PC-3 (cell line): ENCODE measurements at regions of chr17 and their contacts with region 1.

Region 1: GRCh38 chr17:48995974-48996721 is 1.0 kb upstream of the IGF2BP1 start:
- DNase-seq: no peak
- ATAC-seq: no peak
- H3K4me3 ChIP-seq: no peak overlapping the region
- H3K27ac ChIP-seq: no peak overlapping the region
- H3K4me1 ChIP-seq: no peaks in the 10 kb centered on the region
- H3K27me3 ChIP-seq: peaks cover 94% of the 10 kb centered on the region
- CTCF ChIP-seq: no peak

Region 2: DNA sequence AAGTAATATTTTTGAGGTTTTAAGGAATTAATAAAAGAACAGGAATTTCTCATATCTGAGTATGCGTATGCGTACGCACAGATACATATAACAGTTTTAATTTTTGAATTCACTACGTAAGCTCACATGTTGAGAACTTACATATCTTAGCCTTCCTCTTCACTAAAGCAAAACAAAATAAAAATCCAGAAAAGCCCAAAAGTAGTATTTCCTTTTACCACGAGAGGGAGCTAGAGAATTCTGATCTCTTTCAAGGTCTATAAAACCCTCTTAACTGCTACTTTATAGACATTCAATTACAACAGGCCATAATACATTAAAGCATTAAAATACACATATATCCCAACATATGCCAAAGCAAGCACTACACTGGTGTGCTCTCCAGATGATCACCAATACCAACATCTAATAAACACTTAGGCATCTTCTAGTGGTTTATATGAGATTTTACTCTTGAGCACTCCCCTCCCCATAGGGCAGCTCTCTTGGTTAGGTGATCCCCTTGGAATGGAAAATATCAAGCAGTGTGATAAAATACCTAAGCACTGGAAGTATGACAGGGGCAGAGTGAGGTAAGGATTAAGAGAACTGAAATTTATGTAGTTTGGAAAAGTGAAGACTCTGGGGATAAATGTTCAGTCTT is 660.2 kb before region 1 on chr17:
- CTCF ChIA-PET with region 1: interaction called, 11 read pairs
- POLR2A ChIA-PET with region 1: no interaction called
- intact Hi-C with region 1: no loop called
- DNase-seq: peak; percentile 96
- ATAC-seq: peak; percentile 64
- H3K4me3 ChIP-seq: no peak overlapping the region
- H3K27ac ChIP-seq: no peak overlapping the region
- H3K4me1 ChIP-seq: peaks cover 13% of the 10 kb centered on the region
- H3K27me3 ChIP-seq: no peaks in the 10 kb centered on the region; the same call in 1 of the 2 replicates
- CTCF ChIP-seq: peak; percentile 93

Region 3: GRCh38 chr17:49012769-49013255 is 16.7 kb after region 1 on chr17:
- CTCF ChIA-PET with region 1: no interaction called
- POLR2A ChIA-PET with region 1: interaction called, 10 read pairs
- intact Hi-C with region 1: no loop called
- DNase-seq: no peak
- ATAC-seq: no peak
- H3K4me3 ChIP-seq: no peak overlapping the region
- H3K27ac ChIP-seq: no peak overlapping the region
- H3K4me1 ChIP-seq: peaks cover 12% of the 10 kb centered on the region
- H3K27me3 ChIP-seq: peaks cover 76% of the 10 kb centered on the region
- CTCF ChIP-seq: no peak